Activated CD8-positive, alpha-beta T cell treated with anti-CD3 and anti-CD28 coated beads, Interleukin-2, amount 10 ng/mL, durations not matched to agents 7 days and 5 days (primary cell): ENCODE measurements at regions of chr2 and their contacts with region 1.

Region 1: DNA sequence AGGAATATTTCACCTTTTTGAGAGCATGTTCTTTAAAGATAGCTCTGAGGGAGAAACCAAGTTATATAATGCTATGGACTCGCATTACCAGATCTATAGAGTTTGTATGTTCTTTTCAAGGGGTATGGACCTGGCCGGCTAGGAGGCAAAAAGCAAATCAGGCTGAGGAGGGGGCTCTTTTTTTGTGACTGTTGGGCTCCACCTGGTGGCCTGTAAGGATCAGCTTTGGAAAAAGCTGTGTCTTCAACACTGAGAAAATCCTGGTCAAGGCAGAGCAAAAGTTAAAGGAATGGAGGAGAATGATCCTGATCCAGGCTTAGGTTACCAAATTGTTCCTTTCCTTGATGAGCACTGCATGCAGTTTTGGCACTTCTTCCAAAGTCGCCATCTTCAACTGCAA is 180.5 kb downstream of the DIS3L2 start:
- DNase-seq: peak; percentile 46
- ATAC-seq: no peak
- H3K4me3 Mint-ChIP-seq: no peak overlapping the region
- H3K27ac Mint-ChIP-seq: no peak overlapping the region
- H3K4me1 Mint-ChIP-seq: peaks cover 27% of the 10 kb centered on the region
- H3K27me3 Mint-ChIP-seq: no peaks in the 10 kb centered on the region

Region 2: GRCh38 chr2:231910771-231911170 is 231.3 kb before region 1 on chr2:
- CTCF ChIA-PET with region 1: interaction called, 19 read pairs
- POLR2A ChIA-PET with region 1: no interaction called
- DNase-seq: no peak
- ATAC-seq: no peak
- H3K4me3 Mint-ChIP-seq: no peak overlapping the region
- H3K27ac Mint-ChIP-seq: peak overlapping the region; percentile 63
- H3K4me1 Mint-ChIP-seq: peaks cover 33% of the 10 kb centered on the region
- H3K27me3 Mint-ChIP-seq: peaks cover 3% of the 10 kb centered on the region

Region 3: GRCh38 chr2:231925303-231926179 is 216.5 kb before region 1 on chr2:
- CTCF ChIA-PET with region 1: interaction called, 76 read pairs
- POLR2A ChIA-PET with region 1: no interaction called
- DNase-seq: peak; percentile 78
- ATAC-seq: peak; percentile 68
- H3K4me3 Mint-ChIP-seq: peak overlapping the region; percentile 60
- H3K27ac Mint-ChIP-seq: no peak overlapping the region
- H3K4me1 Mint-ChIP-seq: peaks cover 14% of the 10 kb centered on the region
- H3K27me3 Mint-ChIP-seq: peaks cover 34% of the 10 kb centered on the region